ENCODE measurements at regions of chr6 and their contacts with region 1.

Region 1: DNA sequence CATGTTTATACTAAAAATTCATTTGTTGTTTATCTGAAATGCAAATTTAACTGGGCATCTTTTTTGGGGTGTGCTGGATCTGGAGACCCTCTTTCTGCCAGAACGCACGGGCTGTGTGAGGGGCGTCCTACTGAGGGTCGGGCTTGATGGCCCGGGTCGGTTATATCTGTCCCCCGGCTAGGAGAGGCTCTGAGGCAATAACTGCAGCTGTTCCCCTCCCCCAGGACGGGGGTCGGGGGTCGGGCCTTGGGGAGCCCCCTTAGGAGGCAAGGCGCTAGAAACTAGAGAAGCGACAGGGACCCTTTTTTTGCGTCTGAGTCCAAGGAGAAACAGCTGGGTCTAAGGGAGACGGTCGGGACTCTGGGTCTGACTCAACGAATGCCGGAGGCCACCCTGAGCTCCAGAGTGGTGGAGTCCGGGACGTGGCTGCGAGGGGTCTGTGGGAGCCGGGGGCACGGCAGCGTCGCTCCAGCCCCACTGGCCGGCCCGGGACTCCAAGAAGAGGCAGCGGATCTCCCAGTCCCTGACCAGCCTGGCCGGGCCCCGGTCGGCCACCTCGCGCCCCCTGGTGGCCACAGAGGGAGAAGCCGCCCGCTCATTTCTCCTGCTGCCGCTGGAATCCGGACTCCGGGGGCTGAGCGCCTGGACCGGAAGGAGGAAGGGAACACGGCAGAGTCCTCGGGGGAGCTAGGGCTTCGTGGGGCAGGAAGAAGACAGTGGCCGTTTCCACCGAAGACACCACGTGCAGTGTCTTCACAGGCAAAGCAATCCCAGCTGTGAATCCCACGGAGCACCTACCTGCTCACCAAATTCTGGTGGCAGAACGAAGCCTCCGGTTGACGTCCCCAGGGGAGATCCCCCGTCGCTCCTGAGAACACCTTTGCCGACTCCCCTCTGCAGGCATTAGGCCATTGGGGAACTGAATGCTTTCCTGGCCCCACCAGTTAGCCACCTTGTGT is 24.0 kb upstream of the SCML4 start:
- DNase-seq: peak; percentile 88
- ATAC-seq: peak; percentile 91
- H3K4me3 Mint-ChIP-seq: peak overlapping the region; percentile 71
- H3K27ac Mint-ChIP-seq: peak overlapping the region; percentile 70
- H3K4me1 Mint-ChIP-seq: peaks cover 21% of the 10 kb centered on the region
- H3K27me3 Mint-ChIP-seq: no peaks in the 10 kb centered on the region

Region 2: GRCh38 chr6:107716688-107717089 is 131.4 kb before region 1 on chr6:
- CTCF ChIA-PET with region 1: interaction called, 15 read pairs
- POLR2A ChIA-PET with region 1: interaction called, 3 read pairs
- intact Hi-C with region 1: loop called in 1 of 2 experiments (anchors 1 kb)
- DNase-seq: peak; percentile 84
- ATAC-seq: peak; percentile 62
- H3K4me3 Mint-ChIP-seq: peak overlapping the region; percentile 53
- H3K27ac Mint-ChIP-seq: peak overlapping the region; percentile 90
- H3K4me1 Mint-ChIP-seq: peaks cover 72% of the 10 kb centered on the region
- H3K27me3 Mint-ChIP-seq: no peaks in the 10 kb centered on the region

Region 3: GRCh38 chr6:107769053-107769658 is 79.0 kb before region 1 on chr6:
- CTCF ChIA-PET with region 1: interaction called, 12 read pairs
- POLR2A ChIA-PET with region 1: no interaction called
- intact Hi-C with region 1: no loop called
- DNase-seq: no peak
- ATAC-seq: no peak
- H3K4me3 Mint-ChIP-seq: no peak overlapping the region
- H3K27ac Mint-ChIP-seq: no peak overlapping the region
- H3K4me1 Mint-ChIP-seq: peaks cover 34% of the 10 kb centered on the region
- H3K27me3 Mint-ChIP-seq: no peaks in the 10 kb centered on the region

Region 4: DNA sequence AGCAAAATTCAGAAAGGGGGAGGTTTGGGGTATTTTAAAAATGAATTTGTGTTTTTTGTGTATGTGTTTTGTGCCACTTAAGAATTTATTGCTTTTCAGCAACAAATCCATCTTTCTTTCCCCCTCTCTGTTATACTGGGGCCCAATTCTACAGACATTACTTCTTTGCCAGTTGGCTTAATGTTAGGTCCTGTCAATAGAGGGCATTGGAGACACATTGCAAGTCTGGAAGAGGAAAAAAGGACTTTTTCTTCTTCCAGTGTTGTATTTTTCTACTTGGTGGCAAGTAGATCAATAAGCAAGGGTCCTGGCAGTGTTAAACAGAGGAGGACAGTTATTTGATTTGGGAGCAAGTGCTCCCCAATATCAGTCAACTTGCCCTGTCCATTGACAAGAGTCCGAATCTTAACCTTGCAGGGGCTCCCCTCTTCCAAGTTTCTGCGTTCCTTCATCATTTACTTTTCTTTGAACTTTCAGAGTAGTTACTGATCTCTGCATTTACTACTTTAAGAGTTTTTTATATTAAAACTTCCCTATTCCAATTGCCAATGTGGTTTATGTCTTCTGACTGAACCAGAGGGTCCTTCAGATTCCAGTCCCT is 47.5 kb before region 1 on chr6:
- CTCF ChIA-PET with region 1: interaction called, 16 read pairs
- POLR2A ChIA-PET with region 1: interaction called, 3 read pairs
- intact Hi-C with region 1: loop called (anchors 1 to 2 kb)
- DNase-seq: no peak
- ATAC-seq: no peak
- H3K4me3 Mint-ChIP-seq: no peak overlapping the region
- H3K27ac Mint-ChIP-seq: peak overlapping the region; percentile 2
- H3K4me1 Mint-ChIP-seq: peaks cover 69% of the 10 kb centered on the region
- H3K27me3 Mint-ChIP-seq: no peaks in the 10 kb centered on the region

Region 5: GRCh38 chr6:107832151-107833056 is 15.7 kb before region 1 on chr6:
- CTCF ChIA-PET with region 1: interaction called, 42 read pairs
- POLR2A ChIA-PET with region 1: no interaction called
- intact Hi-C with region 1: no loop called
- DNase-seq: no peak
- ATAC-seq: peak; percentile 51
- H3K4me3 Mint-ChIP-seq: no peak overlapping the region
- H3K27ac Mint-ChIP-seq: no peak overlapping the region
- H3K4me1 Mint-ChIP-seq: peaks cover 26% of the 10 kb centered on the region
- H3K27me3 Mint-ChIP-seq: no peaks in the 10 kb centered on the region